ENCODE measurements at regions of chr6 and their contacts with region 1.

Region 1: GRCh38 chr6:107330168-107330567 is 129.2 kb downstream of the PDSS2 start:
- DNase-seq: no peak
- ATAC-seq: peak; percentile 94
- H3K4me3 Mint-ChIP-seq: peak overlapping the region; percentile 25
- H3K27ac Mint-ChIP-seq: peak overlapping the region; percentile 41
- H3K4me1 Mint-ChIP-seq: peaks cover 18% of the 10 kb centered on the region
- H3K27me3 Mint-ChIP-seq: no peaks in the 10 kb centered on the region
- CTCF ChIP-seq: no peak

Region 2: DNA sequence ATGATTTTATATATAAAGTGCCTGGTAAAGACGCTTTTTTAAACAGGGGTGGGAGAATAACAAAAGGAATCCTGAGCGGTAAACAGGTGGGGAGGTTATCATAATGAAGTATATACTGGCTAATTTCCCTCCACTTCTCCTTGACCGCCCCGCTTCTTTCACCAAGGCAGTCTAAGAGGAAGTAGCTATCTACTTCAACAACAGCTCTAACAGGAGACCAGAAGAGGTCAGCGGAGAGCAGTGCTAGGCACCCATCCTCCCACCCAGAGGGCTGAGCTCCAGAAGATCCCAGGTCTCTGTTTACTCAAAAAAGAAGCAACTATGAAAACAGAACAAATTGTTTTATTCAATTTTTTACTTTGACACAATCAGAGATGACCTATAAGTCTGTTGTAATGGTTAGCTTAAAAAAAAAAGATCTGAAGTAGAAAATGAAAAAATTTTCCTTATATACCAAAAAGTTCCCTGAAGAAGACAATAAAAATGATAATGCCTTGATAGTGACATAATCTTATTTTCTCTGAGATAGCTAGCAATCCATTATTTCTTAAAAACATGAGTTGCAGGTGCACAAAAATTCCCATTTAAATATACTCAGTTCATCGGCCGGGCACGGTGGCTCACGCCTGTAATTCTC is 11.9 kb before region 1 on chr6:
- CTCF ChIA-PET with region 1: interaction called, 30 read pairs
- POLR2A ChIA-PET with region 1: interaction called, 3 read pairs
- intact Hi-C with region 1: no loop called
- DNase-seq: no peak
- ATAC-seq: peak; percentile 85
- H3K4me3 Mint-ChIP-seq: no peak overlapping the region
- H3K27ac Mint-ChIP-seq: no peak overlapping the region
- H3K4me1 Mint-ChIP-seq: peaks cover 15% of the 10 kb centered on the region
- H3K27me3 Mint-ChIP-seq: no peaks in the 10 kb centered on the region
- CTCF ChIP-seq: no peak

Region 3: DNA sequence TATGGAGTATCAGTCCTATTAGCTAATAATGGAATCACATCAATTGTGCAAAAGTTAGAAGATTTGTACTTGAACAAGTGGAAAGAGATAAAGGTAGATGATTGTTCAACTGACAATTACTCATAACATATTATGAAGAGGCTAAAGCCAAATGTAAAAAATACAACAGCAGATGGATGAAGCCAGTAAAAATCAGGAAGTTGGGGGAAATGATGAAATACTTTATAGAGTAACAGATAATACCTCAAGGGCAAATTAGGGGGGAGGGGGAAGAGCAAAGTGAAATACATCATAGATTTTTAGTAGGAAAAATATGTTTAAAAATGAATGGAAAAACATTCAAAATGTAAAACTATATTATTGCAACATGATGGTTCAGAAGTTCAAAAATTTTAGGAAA is 15.2 kb after region 1 on chr6:
- CTCF ChIA-PET with region 1: no interaction called
- POLR2A ChIA-PET with region 1: no interaction called
- intact Hi-C with region 1: loop called (anchors 2 kb)
- DNase-seq: no peak
- ATAC-seq: no peak
- H3K4me3 Mint-ChIP-seq: no peak overlapping the region
- H3K27ac Mint-ChIP-seq: no peak overlapping the region
- H3K4me1 Mint-ChIP-seq: peaks cover 8% of the 10 kb centered on the region
- H3K27me3 Mint-ChIP-seq: no peaks in the 10 kb centered on the region
- CTCF ChIP-seq: no peak

Region 4: DNA sequence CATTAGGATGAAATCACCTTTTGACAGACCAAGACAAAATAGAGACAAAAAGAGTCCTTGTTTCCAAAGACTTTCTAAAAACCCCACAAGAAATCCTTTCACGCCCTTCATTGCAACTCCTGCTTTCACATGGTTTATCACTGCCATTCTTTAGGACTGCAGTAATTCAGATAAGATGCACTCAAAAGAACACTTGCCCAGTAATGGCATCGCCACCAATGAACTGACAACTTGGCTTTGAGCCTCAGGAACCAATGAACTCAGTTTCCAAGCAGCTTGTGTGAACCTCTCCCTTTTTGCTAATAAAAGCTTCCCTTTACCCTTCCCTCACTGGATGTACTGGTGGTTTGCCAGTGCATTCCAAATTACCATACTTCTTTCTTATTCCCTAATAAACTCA is 722.5 kb after region 1 on chr6:
- CTCF ChIA-PET with region 1: no interaction called
- POLR2A ChIA-PET with region 1: no interaction called
- intact Hi-C with region 1: no loop called
- DNase-seq: no peak
- ATAC-seq: no peak
- H3K4me3 Mint-ChIP-seq: no peak overlapping the region
- H3K27ac Mint-ChIP-seq: no peak overlapping the region
- H3K4me1 Mint-ChIP-seq: no peaks in the 10 kb centered on the region
- H3K27me3 Mint-ChIP-seq: no peaks in the 10 kb centered on the region
- CTCF ChIP-seq: no peak